IMR-90 (cell line): ENCODE measurements at regions of chr19 and their contacts with region 1.

Region 1: DNA sequence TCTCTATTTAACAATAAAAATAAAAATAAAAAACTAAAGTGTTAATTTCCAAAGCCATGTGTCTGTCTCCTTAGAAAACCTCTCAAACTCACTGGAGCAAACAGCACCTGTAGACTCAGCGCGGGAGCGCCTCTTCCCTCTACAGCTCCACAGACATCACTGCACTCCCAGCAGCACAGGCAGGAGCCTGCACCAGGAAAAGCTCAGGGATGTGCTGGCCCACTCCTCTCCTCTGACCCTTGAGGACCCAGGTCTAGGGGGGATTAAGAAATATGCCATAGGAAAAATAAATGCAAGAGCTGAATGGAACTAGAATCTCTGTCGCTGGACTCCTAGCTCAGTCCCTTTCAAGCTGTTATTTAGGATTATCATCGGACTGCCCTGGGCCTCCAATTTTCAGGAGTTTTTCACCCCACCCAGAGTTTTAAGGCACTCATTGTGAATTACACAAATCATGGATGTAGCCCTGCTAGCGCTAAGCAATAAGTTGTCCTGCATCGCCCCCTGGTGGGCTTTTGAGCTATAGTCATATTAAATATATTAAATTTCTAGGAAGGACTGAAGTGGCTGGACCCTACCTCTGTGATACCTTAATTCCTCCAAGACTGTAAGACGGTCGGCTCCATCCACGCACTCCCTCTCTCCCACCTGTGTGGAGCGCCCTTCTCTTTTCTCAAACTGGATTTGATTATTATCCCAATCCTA is 333.9 kb downstream of the UQCRFS1 start:
- DNase-seq: peak; percentile 71
- ATAC-seq: peak; percentile 74
- H3K4me3 ChIP-seq: no peak overlapping the region
- H3K27ac ChIP-seq: no peak overlapping the region
- H3K4me1 ChIP-seq: no peaks in the 10 kb centered on the region; the same call in 1 of the 2 replicates
- H3K27me3 ChIP-seq: no peaks in the 10 kb centered on the region
- CTCF ChIP-seq: peak; percentile 78
- POLR2A ChIP-seq: no peak
- RAD21 ChIP-seq: peak; percentile 85

Region 2: DNA sequence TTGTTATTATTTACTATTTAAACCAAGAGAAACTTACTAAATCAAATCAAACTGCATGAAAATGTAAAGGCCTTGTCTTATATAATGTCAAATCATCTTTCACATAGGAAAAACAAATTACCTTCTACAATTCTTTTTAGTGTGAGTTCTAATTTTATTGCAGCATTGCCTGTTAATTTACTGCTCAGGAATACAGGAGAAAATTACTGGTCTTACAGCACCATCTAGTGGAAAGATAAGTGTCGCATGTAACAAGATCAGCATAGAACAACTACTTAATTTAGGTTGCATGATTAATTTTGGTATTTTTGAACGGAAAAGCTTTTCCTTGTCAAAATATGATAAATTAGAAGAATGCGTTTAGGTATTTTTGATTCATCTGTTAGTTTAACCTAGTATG is 168.7 kb before region 1 on chr19:
- CTCF ChIA-PET with region 1: no interaction called
- POLR2A ChIA-PET with region 1: no interaction called
- dilution Hi-C with region 1: no loop called
- in situ Hi-C with region 1: no loop called
- intact Hi-C with region 1: loop called (anchors 1 kb)
- DNase-seq: peak; percentile 67
- ATAC-seq: peak; percentile 59; the same call in 1 of the 2 replicates
- H3K4me3 ChIP-seq: no peak overlapping the region
- H3K27ac ChIP-seq: no peak overlapping the region
- H3K4me1 ChIP-seq: no peaks in the 10 kb centered on the region
- H3K27me3 ChIP-seq: no peaks in the 10 kb centered on the region
- CTCF ChIP-seq: peak; percentile 70
- POLR2A ChIP-seq: no peak
- RAD21 ChIP-seq: peak; percentile 74

Region 3: GRCh38 chr19:28737021-28737895 is 141.8 kb before region 1 on chr19:
- CTCF ChIA-PET with region 1: interaction called, 3 read pairs
- POLR2A ChIA-PET with region 1: no interaction called
- dilution Hi-C with region 1: no loop called
- in situ Hi-C with region 1: loop called (anchors 10 kb)
- intact Hi-C with region 1: loop called (anchors 1 kb)
- DNase-seq: peak; percentile 44
- ATAC-seq: peak; percentile 79
- H3K4me3 ChIP-seq: no peak overlapping the region
- H3K27ac ChIP-seq: no peak overlapping the region
- H3K4me1 ChIP-seq: no peaks in the 10 kb centered on the region
- H3K27me3 ChIP-seq: no peaks in the 10 kb centered on the region
- CTCF ChIP-seq: peak; percentile 71
- POLR2A ChIP-seq: no peak
- RAD21 ChIP-seq: peak; percentile 59

Region 4: DNA sequence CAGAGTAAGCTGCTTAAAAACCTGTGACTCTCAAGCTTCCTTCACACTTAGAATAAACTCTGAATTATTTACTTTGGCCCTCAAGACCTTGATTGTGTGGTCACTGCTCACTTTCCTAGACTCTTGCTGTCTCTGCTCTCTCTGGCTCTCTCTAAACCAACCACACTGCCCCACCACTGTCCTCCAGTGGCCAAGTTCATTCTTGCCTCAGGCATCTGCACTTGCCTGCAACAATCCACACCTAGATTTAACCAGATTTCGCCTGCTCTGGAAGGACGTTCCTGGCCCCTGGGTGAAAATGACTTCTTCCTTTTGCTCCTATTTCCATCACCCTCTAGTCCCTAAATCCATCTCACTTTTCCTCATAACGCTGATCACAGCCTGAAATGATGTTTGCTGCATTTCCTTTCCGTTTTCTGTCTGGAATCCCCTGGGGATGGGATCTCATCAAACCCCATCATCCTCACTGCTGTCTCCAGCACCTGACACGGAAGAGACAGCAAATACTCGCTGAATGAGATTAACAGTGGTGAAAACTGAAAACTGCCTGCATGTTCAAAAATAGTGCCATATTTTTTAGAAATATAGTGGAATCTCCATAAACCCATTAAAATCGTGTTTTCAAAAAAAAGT is 101.3 kb after region 1 on chr19:
- CTCF ChIA-PET with region 1: no interaction called
- POLR2A ChIA-PET with region 1: no interaction called
- dilution Hi-C with region 1: no loop called
- in situ Hi-C with region 1: no loop called
- intact Hi-C with region 1: loop called (anchors 1 kb)
- DNase-seq: peak; percentile 68
- ATAC-seq: peak; percentile 95
- H3K4me3 ChIP-seq: no peak overlapping the region
- H3K27ac ChIP-seq: no peak overlapping the region
- H3K4me1 ChIP-seq: no peaks in the 10 kb centered on the region
- H3K27me3 ChIP-seq: peaks cover 2% of the 10 kb centered on the region
- CTCF ChIP-seq: peak; percentile 68
- POLR2A ChIP-seq: no peak
- RAD21 ChIP-seq: peak; percentile 76

Region 5: GRCh38 chr19:29014907-29015306 is 135.9 kb after region 1 on chr19:
- CTCF ChIA-PET with region 1: no interaction called
- POLR2A ChIA-PET with region 1: no interaction called
- dilution Hi-C with region 1: no loop called
- in situ Hi-C with region 1: no loop called
- intact Hi-C with region 1: no loop called
- DNase-seq: no peak
- ATAC-seq: peak; percentile 21; the same call in 1 of the 2 replicates
- H3K4me3 ChIP-seq: no peak overlapping the region
- H3K27ac ChIP-seq: no peak overlapping the region
- H3K4me1 ChIP-seq: no peaks in the 10 kb centered on the region
- H3K27me3 ChIP-seq: no peaks in the 10 kb centered on the region; the same call in 1 of the 2 replicates
- CTCF ChIP-seq: no peak
- POLR2A ChIP-seq: no peak
- RAD21 ChIP-seq: no peak

Region 6: GRCh38 chr19:29263305-29264135 is 384.5 kb after region 1 on chr19:
- CTCF ChIA-PET with region 1: no interaction called
- POLR2A ChIA-PET with region 1: no interaction called
- dilution Hi-C with region 1: no loop called
- in situ Hi-C with region 1: no loop called
- intact Hi-C with region 1: loop called (anchors 2 kb)
- DNase-seq: peak; percentile 17
- ATAC-seq: peak; percentile 69
- H3K4me3 ChIP-seq: no peak overlapping the region
- H3K27ac ChIP-seq: no peak overlapping the region
- H3K4me1 ChIP-seq: no peaks in the 10 kb centered on the region
- H3K27me3 ChIP-seq: no peaks in the 10 kb centered on the region
- CTCF ChIP-seq: peak; percentile 62
- POLR2A ChIP-seq: no peak
- RAD21 ChIP-seq: peak; percentile 60